ENCODE measurements at regions of chr11 and their contacts with region 1.

Region 1: DNA sequence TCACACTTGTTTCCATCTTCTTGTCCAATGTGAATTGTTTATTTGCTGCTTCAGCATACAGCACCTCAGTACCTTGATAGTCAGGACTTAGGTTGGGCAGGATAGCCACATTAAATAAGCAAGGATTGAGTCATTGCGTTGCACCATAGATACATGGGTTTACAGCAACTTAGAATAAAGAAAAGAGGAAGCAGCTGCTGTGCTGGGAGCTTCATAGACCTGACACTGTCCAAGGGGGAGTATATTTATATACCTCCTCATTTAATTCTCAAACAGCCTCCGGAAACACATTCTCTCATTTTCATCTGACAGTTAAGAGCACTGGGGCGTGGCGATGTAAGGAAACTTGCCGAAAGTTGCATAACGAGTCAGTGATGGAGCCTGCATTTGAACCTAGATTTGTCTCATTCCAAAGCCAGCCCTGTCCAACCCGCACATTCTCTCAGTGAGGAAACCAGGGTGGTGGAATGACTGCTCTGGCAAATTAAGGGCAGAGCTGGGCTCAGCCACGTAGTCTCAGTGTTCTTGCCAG is 42.2 kb downstream of the UBASH3B start:
- DNase-seq: peak; percentile 38
- H3K4me3 Mint-ChIP-seq: peak overlapping the region; percentile 68
- H3K27ac Mint-ChIP-seq: peak overlapping the region; percentile 88
- H3K4me1 Mint-ChIP-seq: peaks cover 53% of the 10 kb centered on the region
- H3K27me3 Mint-ChIP-seq: no peaks in the 10 kb centered on the region

Region 2: GRCh38 chr11:122405547-122406341 is 292.0 kb before region 1 on chr11:
- intact Hi-C with region 1: no loop called
- DNase-seq: no peak
- H3K4me3 Mint-ChIP-seq: no peak overlapping the region
- H3K27ac Mint-ChIP-seq: no peak overlapping the region
- H3K4me1 Mint-ChIP-seq: no peaks in the 10 kb centered on the region
- H3K27me3 Mint-ChIP-seq: no peaks in the 10 kb centered on the region

Region 3: DNA sequence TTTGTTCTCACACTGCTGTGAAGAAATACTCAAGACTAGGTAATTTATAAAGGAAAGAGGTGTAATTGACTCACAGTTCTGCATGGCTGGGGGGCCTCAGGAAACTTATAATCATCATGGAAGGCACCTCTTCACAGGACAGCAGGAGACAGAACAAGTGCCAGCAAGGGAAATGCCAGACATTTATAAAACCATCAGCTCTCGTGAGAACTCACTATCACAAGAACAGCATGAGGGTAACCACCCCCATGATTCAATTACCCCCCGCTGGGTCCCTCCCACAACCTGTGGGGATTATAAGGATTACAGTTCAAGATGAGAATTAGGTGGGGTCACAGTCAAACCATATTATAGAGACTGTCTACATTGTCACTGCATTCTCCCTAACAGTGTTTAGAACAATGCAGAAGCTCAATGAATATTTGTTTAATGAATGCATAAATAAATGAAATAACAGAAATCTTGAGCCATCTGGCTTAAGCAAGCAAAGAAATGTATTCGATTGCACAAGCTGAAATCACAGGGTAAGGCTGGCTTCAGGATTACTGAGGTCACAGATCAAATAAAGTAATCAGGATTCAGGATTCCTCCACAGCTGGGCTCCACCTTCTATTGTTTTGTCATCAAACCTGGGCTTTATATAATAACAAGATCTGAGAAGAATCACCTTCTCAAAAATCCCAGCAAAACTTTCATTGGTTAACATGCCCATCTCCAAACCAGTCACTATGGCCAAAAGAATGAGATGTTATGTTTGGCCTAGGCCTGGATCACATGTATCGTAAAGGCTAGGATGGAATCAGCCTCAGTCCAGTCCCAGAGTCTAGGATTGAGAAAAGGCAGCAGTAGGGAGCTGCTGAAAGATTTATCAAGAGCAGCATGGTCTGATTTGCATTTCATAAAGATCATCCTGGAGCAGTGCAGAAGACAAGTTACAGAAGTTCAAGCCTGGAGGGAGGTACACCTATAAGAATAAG is 180.0 kb before region 1 on chr11:
- intact Hi-C with region 1: no loop called
- DNase-seq: no peak
- H3K4me3 Mint-ChIP-seq: no peak overlapping the region
- H3K27ac Mint-ChIP-seq: no peak overlapping the region
- H3K4me1 Mint-ChIP-seq: no peaks in the 10 kb centered on the region
- H3K27me3 Mint-ChIP-seq: peaks cover 2% of the 10 kb centered on the region

Region 4: GRCh38 chr11:122655527-122656072 is 42.1 kb before region 1 on chr11 and contains the start of gene UBASH3B:
- intact Hi-C with region 1: loop called (anchors 1 kb)
- DNase-seq: peak; percentile 55
- H3K4me3 Mint-ChIP-seq: peak within 1 kb of the TSS; percentile 94
- H3K27ac Mint-ChIP-seq: peak within 1 kb of the TSS; percentile 81
- H3K4me1 Mint-ChIP-seq: peaks cover 9% of the 10 kb centered on the region
- H3K27me3 Mint-ChIP-seq: peaks cover 61% of the 10 kb centered on the region
- total RNA-seq, gene UBASH3B: 19.3 and 20.1 TPM in 2 replicates

Region 5: DNA sequence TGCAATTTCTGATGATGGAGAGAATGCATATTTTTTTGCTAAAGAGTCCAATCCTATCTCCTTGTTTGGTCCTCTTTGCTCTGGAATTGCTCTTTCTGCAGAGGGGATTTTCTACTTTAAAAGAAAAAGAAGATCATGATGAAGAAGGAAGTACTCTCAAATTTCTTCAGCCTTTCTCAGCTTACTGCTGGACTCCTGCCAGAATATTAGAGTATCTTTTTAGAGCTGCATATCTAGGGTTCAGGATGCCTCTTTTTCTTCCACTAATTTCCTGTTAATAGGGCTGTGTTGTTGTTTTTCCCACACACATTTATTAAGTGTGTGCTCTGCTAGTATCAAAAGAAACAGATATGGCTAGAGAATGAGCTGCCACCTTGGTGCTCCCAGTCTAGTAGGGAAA is 24.0 kb before region 1 on chr11:
- intact Hi-C with region 1: loop called (anchors 2 kb)
- DNase-seq: no peak
- H3K4me3 Mint-ChIP-seq: no peak overlapping the region
- H3K27ac Mint-ChIP-seq: no peak overlapping the region
- H3K4me1 Mint-ChIP-seq: peaks cover 39% of the 10 kb centered on the region
- H3K27me3 Mint-ChIP-seq: peaks cover 2% of the 10 kb centered on the region

Region 6: DNA sequence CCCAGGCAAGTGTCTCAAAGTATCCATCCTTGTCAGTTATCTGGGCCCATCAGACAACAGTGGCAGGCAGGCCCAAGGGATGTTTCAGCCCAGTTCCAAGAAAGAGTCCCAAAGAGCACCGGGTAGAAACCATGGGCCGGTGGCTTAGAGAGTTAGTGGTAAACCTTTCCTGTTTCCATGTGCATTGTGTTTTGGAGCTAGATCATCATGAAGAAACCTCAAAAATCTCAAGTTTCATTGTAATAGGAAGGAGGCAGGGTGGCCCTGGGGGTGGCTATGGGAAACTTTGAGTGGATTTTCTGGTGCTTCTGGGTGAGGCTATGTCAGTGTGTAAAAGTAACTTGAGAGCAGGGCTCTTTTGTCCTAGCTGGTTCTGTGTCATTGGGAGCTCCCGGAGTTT is 25.9 kb after region 1 on chr11:
- intact Hi-C with region 1: loop called (anchors 1 kb)
- DNase-seq: no peak
- H3K4me3 Mint-ChIP-seq: peak overlapping the region; percentile 47
- H3K27ac Mint-ChIP-seq: peak overlapping the region; percentile 88
- H3K4me1 Mint-ChIP-seq: peaks cover 56% of the 10 kb centered on the region
- H3K27me3 Mint-ChIP-seq: peaks cover 13% of the 10 kb centered on the region